HepG2 (cell line): ENCODE measurements at regions of chr16 and their contacts with region 1.

Region 1: DNA sequence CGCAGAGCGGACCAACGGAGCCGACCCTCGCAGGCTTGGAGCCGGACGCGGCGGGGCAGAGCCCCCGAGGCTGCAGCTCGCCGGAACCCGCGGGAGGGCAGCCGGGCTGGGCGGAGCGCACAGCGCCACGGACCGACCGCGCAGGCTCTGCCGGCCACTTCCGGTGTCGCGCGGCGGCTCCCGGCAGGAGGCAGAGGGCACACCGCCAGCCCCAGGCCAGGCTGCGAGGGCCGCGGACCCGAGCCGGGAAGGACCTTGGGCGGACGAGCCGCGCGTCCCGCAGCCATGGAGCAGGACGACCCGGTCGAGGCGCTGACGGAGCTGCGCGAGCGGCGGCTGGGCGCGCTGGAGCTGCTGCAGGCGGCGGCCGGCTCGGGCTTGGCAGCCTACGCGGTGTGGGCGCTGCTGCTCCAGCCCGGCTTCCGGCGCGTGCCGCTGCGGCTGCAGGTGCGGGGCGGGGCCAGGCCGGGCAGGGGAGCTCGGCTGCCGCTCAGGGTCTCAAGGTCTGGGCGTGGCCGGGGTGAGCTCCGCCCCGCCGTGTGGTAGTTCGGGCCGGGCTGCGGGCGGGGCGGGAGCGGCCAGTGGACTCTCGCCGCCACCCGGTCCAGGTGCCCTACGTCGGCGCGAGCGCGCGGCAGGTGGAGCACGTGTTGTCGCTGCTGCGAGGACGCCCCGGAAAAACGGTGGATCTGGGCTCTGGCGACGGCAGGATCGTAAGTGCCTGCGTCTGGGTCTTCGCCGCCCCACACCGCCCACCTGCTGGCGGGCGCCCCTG is at the start of gene ANTKMT:
- DNase-seq: peak; percentile 80
- ATAC-seq: peak; percentile 70
- H3K4me3 ChIP-seq: peak within 1 kb of the TSS; percentile 77 to 95 (median 85)
- H3K27ac ChIP-seq: peak within 1 kb of the TSS; percentile 88
- H3K4me1 ChIP-seq: peaks cover 33% of the 10 kb centered on the region
- H3K27me3 ChIP-seq: no peaks in the 10 kb centered on the region
- CTCF ChIP-seq: no peak; the same call in 1 of the 2 replicates
- EP300 ChIP-seq: 0 out of 4 replicates have a peak, but pooled peaks of 1 of the 2 experiments have one; percentile 15
- POLR2A ChIP-seq: peak; percentile 82 to 88
- RAD21 ChIP-seq: peak; percentile 41; the same call in 1 of the 2 replicates
- total RNA-seq, gene ANTKMT: 17.8 and 47.8 TPM in 2 replicates

Region 2: DNA sequence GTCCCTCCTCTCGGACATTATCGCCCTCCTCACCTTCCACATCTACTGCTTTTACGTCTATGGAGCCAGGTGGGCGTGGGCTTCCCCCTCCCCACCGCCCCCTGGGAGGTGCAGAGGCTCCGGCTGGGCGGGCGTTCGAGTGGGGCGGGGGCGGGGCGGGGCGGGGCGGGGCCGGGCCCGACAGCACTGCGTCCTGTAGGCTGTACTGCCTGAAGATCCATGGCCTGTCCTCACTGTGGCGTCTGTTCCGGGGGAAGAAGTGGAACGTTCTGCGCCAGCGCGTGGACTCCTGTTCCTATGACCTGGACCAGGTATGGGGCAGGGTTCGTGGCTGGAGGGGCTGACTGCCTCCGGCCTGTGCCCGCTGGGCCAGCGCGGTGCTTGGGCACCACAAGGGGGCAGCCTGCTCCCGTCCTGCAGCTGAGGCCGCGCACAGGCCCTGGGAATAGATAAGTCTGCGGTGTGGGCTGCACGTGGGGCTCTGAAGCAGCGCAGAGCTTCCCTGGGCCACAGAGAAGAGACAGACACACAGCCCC is 142.2 kb before region 1 on chr16:
- CTCF ChIA-PET with region 1: no interaction called
- POLR2A ChIA-PET with region 1: no interaction called
- in situ Hi-C with region 1: no loop called
- intact Hi-C with region 1: no loop called
- DNase-seq: peak; percentile 60
- ATAC-seq: peak; percentile 81
- H3K4me3 ChIP-seq: peak overlapping the region in 1 of 3 experiments; percentile 24; a peak in 1 of 6 replicates
- H3K27ac ChIP-seq: no peak overlapping the region
- H3K4me1 ChIP-seq: peaks cover 12% of the 10 kb centered on the region
- H3K27me3 ChIP-seq: no peaks in the 10 kb centered on the region
- CTCF ChIP-seq: peak; percentile 98
- EP300 ChIP-seq: no peak
- POLR2A ChIP-seq: no peak
- RAD21 ChIP-seq: peak; percentile 96

Region 3: GRCh38 chr16:695355-696089 is 25.7 kb before region 1 on chr16:
- CTCF ChIA-PET with region 1: no interaction called
- POLR2A ChIA-PET with region 1: interaction called, 21 read pairs
- in situ Hi-C with region 1: no loop called
- intact Hi-C with region 1: no loop called
- DNase-seq: no peak
- ATAC-seq: peak; percentile 31
- H3K4me3 ChIP-seq: peak overlapping the region in 2 of 3 experiments; percentile 57 to 65; a peak in 3 of 6 replicates
- H3K27ac ChIP-seq: no peak overlapping the region
- H3K4me1 ChIP-seq: peaks cover 12% of the 10 kb centered on the region
- H3K27me3 ChIP-seq: peaks cover 15 to 45% of the 10 kb centered on the region in 2 experiments
- CTCF ChIP-seq: peak; percentile 25; the same call in 1 of the 2 replicates
- EP300 ChIP-seq: no peak
- POLR2A ChIP-seq: 0 out of 4 replicates have a peak, but pooled peaks of 1 of the 2 experiments have one; percentile 49
- RAD21 ChIP-seq: no peak

Region 4: DNA sequence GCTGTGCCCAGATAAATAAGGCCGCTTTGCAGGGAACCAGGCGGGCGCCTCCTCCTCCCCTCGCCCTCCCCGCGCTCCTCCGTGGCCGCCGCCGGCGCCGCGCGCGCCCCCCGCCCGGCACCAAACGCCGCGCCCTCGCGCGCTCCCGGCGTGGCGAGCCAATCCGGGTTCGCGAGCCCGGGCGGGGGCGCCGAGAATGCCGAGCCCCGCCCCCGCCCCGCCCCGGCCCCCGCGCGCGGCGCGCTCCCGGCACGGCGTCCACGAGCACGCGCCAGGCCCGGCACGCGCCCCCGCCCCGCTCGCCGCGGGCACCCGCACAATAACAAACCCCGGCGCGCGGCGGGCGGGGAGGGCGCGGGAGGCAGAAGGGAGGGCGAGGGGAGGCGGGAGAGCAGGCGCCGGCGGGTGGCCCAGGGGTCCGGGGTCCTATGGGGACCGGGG is 15.4 kb before region 1 on chr16 and contains the start of gene FBXL16:
- CTCF ChIA-PET with region 1: no interaction called
- POLR2A ChIA-PET with region 1: no interaction called
- in situ Hi-C with region 1: no loop called
- intact Hi-C with region 1: no loop called
- DNase-seq: no peak
- ATAC-seq: no peak
- H3K4me3 ChIP-seq: no peak within 1 kb of the TSS
- H3K27ac ChIP-seq: no peak within 1 kb of the TSS
- H3K4me1 ChIP-seq: no peaks in the 10 kb centered on the region
- H3K27me3 ChIP-seq: peaks cover 28 to 86% of the 10 kb centered on the region in 2 experiments; a peak in 4 of 5 replicates
- CTCF ChIP-seq: no peak
- EP300 ChIP-seq: no peak
- POLR2A ChIP-seq: no peak
- RAD21 ChIP-seq: no peak
- total RNA-seq, gene FBXL16: 0.20 and 0.22 TPM in 2 replicates

Region 5: DNA sequence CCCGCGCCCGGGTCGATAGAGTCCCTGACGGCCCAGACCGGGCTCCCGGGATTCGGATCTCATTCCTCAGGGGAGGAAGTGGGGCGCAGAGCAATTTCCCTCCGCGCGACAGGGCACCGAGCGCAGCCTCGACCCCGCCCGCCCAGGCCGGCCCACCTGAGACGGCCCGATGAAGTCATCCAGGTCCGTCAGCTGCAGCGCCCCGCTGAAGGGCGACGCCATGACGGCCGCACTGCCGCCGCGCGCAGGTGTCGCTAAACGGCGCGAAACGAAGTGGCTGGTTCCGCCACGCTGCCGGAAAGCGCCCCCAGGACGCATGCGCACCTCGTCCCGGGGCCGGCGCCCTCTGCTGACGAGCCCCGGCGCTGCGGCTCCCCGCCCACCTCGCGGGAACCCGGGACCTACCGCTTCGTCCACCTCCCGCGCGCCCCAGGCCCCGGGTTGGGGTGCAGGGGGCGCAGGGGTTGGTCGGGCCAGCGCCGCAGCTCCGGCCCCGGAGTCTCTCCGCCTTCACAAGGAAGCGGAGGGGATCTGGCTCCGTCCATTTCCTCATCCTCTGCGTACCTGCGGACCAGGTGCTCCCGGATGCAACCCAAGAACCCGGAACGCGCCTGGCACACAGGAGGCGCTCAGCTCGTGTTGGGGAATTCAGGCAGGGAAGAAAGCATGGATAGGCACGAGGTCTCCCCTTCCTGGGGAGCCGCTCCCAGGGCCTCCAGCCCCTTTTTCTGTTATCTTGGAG is 19.8 kb after region 1 on chr16 and contains the start of gene CIAO3:
- CTCF ChIA-PET with region 1: no interaction called
- POLR2A ChIA-PET with region 1: interaction called, 22 read pairs
- in situ Hi-C with region 1: no loop called
- intact Hi-C with region 1: no loop called
- DNase-seq: peak; percentile 79
- ATAC-seq: peak; percentile 85
- H3K4me3 ChIP-seq: peak within 1 kb of the TSS; percentile 94 to 97 (median 95)
- H3K27ac ChIP-seq: peak within 1 kb of the TSS; percentile 59
- H3K4me1 ChIP-seq: peaks cover 18% of the 10 kb centered on the region
- H3K27me3 ChIP-seq: no peaks in the 10 kb centered on the region
- CTCF ChIP-seq: peak; percentile 94
- EP300 ChIP-seq: 0 out of 4 replicates have a peak, but pooled peaks of 1 of the 2 experiments have one; percentile 11
- POLR2A ChIP-seq: peak; percentile 50 to 68; a peak in 3 of 4 replicates
- RAD21 ChIP-seq: peak; percentile 78
- total RNA-seq, gene CIAO3: 16.9 and 21.7 TPM in 2 replicates

Region 6: GRCh38 chr16:760545-761343 is 39.6 kb after region 1 on chr16 and contains the start of gene MSLN:
- CTCF ChIA-PET with region 1: no interaction called
- POLR2A ChIA-PET with region 1: interaction called, 18 read pairs
- in situ Hi-C with region 1: no loop called
- intact Hi-C with region 1: no loop called
- DNase-seq: peak; percentile 61
- ATAC-seq: peak; percentile 76
- H3K4me3 ChIP-seq: peak within 1 kb of the TSS; percentile 40 to 68 (median 41); a peak in 5 of 6 replicates
- H3K27ac ChIP-seq: no peak within 1 kb of the TSS
- H3K4me1 ChIP-seq: peaks cover 32% of the 10 kb centered on the region
- H3K27me3 ChIP-seq: peaks cover 3 to 17% of the 10 kb centered on the region in 2 experiments; a peak in 4 of 5 replicates
- CTCF ChIP-seq: no peak
- EP300 ChIP-seq: no peak
- POLR2A ChIP-seq: peak in 1 of 2 experiments; percentile 48; a peak in 1 of 4 replicates
- RAD21 ChIP-seq: no peak
- total RNA-seq, gene MSLN: 0.72 and 2.0 TPM in 2 replicates

Region 7: DNA sequence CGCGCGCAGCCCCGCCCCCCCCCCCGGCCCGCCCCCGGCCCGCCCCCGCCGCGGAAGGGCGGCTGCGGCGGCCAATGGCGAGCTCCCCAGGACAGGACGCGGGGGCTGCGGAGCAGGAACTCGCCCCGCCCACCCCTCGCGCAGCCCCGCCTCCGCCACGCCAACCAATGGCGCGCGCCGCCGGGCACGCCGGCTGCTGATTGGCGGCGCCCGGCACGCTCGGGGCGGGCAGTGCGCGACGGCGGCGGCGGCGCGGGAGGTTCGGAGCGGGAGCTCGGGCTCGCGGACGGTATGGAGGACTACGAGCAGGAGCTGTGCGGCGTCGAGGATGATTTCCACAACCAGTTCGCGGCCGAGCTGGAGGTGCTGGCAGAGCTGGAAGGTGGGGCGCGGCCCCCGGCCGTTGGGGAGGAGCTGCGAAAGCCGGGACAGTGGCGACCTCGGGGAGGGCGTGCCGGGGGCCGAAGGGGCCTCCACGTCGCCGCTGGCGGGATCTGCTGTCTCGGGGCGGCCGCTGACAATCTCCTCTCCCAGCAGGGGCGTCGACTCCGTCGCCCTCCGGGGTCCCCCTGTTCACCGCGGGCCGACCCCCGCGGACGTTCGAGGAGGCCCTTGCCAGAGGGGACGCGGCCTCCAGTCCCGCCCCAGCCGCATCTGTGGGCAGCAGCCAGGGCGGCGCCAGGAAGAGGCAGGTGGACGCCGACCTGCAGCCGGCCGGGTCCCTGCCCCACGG is 67.4 kb after region 1 on chr16 and contains the start of gene CHTF18:
- CTCF ChIA-PET with region 1: no interaction called
- POLR2A ChIA-PET with region 1: interaction called, 12 read pairs
- in situ Hi-C with region 1: no loop called
- intact Hi-C with region 1: no loop called
- DNase-seq: peak; percentile 73
- ATAC-seq: peak; percentile 66
- H3K4me3 ChIP-seq: peak within 1 kb of the TSS; percentile 71 to 96 (median 90)
- H3K27ac ChIP-seq: peak within 1 kb of the TSS; percentile 47
- H3K4me1 ChIP-seq: peaks cover 15% of the 10 kb centered on the region
- H3K27me3 ChIP-seq: no peaks in the 10 kb centered on the region; a peak in 1 of 5 replicates
- CTCF ChIP-seq: no peak
- EP300 ChIP-seq: no peak
- POLR2A ChIP-seq: peak in 1 of 2 experiments; percentile 57; a peak in 1 of 4 replicates
- RAD21 ChIP-seq: no peak
- total RNA-seq, gene CHTF18: 8.8 and 22.9 TPM in 2 replicates